ENCODE measurements at regions of chr18 and their contacts with region 1.

Region 1: GRCh38 chr18:3151399-3152264 is 68.1 kb downstream of the MYOM1 start:
- DNase-seq: peak; percentile 59
- ATAC-seq: no peak
- H3K4me3 ChIP-seq: peak overlapping the region; percentile 50; the same call in 1 of the 2 replicates
- H3K27ac ChIP-seq: no peak overlapping the region
- H3K4me1 ChIP-seq: no peaks in the 10 kb centered on the region
- H3K27me3 ChIP-seq: no peaks in the 10 kb centered on the region
- CTCF ChIP-seq: peak; percentile 74

Region 2: GRCh38 chr18:3051718-3052410 is 99.8 kb before region 1 on chr18:
- CTCF ChIA-PET with region 1: no interaction called
- POLR2A ChIA-PET with region 1: no interaction called
- intact Hi-C with region 1: no loop called
- DNase-seq: no peak
- ATAC-seq: peak; percentile 37
- H3K4me3 ChIP-seq: no peak overlapping the region
- H3K27ac ChIP-seq: no peak overlapping the region
- H3K4me1 ChIP-seq: no peaks in the 10 kb centered on the region
- H3K27me3 ChIP-seq: no peaks in the 10 kb centered on the region
- CTCF ChIP-seq: no peak

Region 3: GRCh38 chr18:3088449-3088848 is 63.2 kb before region 1 on chr18:
- CTCF ChIA-PET with region 1: no interaction called
- POLR2A ChIA-PET with region 1: no interaction called
- intact Hi-C with region 1: loop called (anchors 5 kb)
- DNase-seq: no peak
- ATAC-seq: no peak
- H3K4me3 ChIP-seq: no peak overlapping the region
- H3K27ac ChIP-seq: no peak overlapping the region
- H3K4me1 ChIP-seq: peaks cover 8% of the 10 kb centered on the region
- H3K27me3 ChIP-seq: no peaks in the 10 kb centered on the region
- CTCF ChIP-seq: no peak

Region 4: DNA sequence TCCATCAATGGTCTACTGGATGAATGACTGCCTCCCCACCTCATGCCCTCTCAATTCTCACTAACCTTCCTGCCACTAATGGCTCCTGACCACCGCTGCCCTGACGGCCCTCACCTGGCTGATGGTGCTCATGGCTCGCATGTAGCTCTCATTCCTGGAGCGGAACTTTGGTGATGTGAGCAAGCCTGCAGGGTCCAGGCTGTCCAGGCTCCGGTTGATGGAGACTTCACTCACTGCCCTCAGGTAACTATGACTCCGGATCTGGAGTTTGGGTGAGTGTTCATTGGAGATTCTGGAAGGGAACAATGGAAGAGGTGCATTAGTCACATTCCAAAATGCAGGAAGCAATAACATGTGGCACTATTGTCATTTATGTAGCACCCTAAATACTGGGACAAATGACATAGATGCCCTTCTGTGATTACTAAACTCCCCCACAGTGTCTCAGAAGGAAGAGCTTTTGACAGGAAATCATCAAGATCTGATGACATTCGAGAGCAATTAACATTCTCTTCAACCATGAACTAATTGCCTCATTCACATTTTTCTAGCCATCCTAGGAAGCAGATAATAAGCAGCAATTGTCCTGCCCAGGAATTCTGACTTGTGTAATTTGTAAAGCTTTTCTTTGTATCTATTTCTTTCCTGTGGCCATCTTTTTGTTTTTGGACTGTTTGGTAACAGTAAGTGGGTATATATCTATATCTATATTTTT is 590.7 kb after region 1 on chr18:
- CTCF ChIA-PET with region 1: no interaction called
- POLR2A ChIA-PET with region 1: no interaction called
- intact Hi-C with region 1: no loop called
- DNase-seq: no peak
- ATAC-seq: no peak
- H3K4me3 ChIP-seq: no peak overlapping the region
- H3K27ac ChIP-seq: no peak overlapping the region
- H3K4me1 ChIP-seq: no peaks in the 10 kb centered on the region
- H3K27me3 ChIP-seq: no peaks in the 10 kb centered on the region; the same call in 1 of the 2 replicates
- CTCF ChIP-seq: no peak